ENCODE measurements at regions of chr7 and their contacts with region 1.

Region 1: DNA sequence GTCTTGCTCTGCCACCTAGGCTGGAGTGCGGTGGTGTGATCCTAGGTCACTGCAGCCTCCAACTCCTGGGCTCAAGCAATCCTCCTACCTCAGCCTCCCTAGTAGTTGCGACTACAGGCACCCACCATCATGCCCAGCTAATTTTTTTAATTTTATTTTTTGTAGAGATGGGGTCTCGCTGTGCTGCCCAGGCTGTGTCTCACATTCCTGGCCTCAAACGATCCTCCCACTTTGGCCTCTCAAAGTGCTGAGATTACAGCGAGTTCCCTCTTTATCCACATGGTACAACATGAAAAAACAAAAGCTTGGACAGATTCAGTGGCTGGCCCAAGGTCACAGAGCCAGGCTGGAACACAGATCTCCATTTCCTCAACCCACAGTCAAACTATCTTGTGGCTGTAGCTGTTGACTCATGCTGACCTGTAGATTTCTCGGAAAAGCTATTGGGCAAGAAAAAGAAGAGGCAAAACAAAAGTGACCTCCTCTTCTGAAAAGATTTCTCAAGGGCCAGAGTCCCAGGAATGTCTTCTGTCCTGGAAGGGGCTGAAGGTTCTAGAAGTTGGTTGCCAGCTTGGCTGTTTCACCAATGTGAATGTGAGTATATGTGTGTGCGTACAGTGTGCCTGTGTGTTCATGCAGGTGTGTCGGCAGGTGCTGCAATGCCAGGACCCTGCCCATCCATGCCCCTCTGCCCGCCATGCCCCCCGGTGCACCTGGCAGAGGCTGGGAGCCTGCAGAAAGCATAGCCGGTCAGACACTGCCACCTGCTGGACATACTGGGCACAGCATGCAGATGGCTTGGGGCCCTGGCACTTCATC is 28.4 kb downstream of the TMEM130 start:
- DNase-seq: peak; percentile 77
- ATAC-seq: no peak

Region 2: GRCh38 chr7:98434095-98434494 is 407.3 kb before region 1 on chr7:
- intact Hi-C with region 1: loop called (anchors 1 kb)
- DNase-seq: no peak
- ATAC-seq: no peak

Region 3: GRCh38 chr7:98559958-98560357 is 281.4 kb before region 1 on chr7:
- intact Hi-C with region 1: no loop called
- DNase-seq: no peak
- ATAC-seq: no peak

Region 4: GRCh38 chr7:98617051-98617959 is 224.1 kb before region 1 on chr7 and contains the start of gene NPTX2:
- intact Hi-C with region 1: loop called (anchors 10 kb)
- DNase-seq: no peak
- ATAC-seq: peak; percentile 85
- total RNA-seq, gene NPTX2: 3.1 TPM

Region 5: DNA sequence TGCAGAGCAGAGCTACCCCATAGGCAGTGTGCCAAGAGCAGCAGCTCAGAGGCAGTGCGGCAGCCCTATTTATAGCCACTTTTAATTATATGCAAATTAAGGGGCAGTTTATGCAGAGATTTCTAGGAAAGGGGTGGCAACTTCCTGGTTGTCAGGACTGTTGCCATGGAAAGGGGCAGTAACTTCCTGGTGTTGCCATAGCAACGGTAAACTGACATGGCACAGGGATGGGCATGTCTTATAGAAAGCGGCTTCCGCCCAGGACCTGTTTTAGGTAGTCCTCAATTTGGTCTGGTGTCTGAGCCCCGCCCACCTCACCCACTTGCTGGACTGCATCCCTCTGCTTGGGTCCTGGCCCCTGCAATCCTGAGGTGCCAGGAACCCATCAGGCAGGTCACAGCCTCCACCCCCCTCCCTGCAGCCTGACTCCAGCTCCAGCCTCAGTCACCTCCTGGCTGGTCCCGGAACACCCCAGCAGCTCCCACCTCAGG is 87.4 kb before region 1 on chr7:
- intact Hi-C with region 1: loop called (anchors 2 kb)
- DNase-seq: no peak
- ATAC-seq: no peak

Region 6: DNA sequence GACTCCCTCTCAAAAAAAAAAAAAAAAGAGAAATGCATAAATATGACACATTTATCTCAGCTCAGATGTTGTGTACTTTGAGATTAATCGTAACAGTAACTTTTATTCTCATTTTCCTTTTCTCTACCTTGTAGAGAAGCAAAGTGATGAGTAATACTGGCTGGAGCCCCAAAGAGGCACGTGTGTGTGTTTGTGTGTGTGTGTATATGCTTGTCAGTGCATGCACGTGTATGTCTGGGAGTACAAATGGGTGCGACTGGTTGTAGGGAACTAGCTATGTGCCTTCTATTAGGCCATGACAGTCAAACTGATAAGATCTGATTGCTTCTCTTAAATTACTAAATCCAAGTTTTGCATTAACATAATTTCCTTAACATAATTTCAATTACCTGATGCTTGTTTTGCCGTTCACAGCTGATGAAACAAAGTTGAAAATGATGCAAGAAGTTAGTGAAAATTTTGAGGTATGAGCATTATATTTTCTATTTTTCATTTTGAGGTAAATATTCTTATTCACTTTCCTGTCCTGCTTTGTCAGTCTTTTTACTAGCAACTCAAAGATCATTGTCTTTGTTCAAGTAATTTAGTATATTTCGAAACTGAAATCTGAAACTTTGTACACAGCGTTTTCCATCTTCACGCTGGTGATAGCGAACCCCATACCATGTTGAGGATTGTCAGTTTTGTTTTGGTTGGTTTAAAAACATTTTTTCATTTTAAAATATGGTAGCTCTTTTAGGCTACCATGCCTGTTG is 40.4 kb after region 1 on chr7:
- intact Hi-C with region 1: no loop called
- DNase-seq: no peak
- ATAC-seq: no peak